SK-N-SH (cell line): ENCODE measurements at regions of chr5 and their contacts with region 1.

Region 1: DNA sequence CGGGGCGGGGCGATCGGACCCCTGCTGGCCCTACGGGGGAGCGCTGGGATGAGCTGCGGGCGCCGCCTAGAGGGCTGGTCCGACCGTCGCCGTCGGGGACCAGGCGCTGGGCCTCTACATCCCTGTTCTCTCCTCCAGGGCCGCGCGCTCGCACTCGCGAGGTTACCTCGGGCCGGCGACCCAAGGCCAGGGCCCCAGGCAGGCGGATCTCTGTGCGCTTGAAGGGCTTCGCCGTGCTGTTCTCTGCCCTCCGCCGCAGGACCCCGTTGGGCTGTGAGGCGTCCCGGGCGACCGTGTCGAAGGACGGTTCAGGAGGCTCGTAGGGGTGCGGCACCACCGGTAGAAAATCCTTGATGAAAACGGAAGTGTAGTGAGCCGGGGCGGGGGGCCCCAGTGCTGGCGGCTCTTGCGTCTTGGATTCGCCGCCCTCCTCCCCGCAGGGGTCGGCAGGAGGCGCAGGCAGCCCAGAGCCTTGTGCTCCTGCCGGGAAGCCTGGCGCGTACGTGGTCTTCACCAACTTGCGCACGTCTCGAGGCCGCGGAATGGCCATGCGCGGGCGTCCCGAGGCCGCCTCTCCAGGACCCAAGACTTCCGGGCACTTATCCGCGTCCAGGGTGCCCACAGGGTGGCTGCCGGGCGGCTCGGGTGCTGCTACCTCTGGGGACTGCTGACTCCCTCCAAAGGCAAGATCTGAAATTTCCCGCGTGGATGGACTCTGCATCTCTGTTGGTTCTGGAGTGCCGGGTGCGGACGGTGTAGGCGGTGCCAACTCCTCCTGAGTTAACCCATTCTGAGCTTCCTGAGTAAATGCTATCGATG is 2.0 kb downstream of the PROB1 start:
- DNase-seq: peak; percentile 92
- H3K4me3 ChIP-seq: peak overlapping the region; percentile 23 to 26; a peak in 2 of 4 replicates
- H3K27ac ChIP-seq: no peak overlapping the region
- H3K4me1 ChIP-seq: peaks cover 0 to 3% of the 10 kb centered on the region in 2 experiments; a peak in 1 of 4 replicates
- H3K27me3 ChIP-seq: peaks cover 12% of the 10 kb centered on the region; the same call in 1 of the 2 replicates
- CTCF ChIP-seq: peak; percentile 38; the same call in 1 of the 2 replicates
- EP300 ChIP-seq: no peak
- RAD21 ChIP-seq: peak; percentile 45

Region 2: GRCh38 chr5:138369706-138370105 is 1023.2 kb before region 1 on chr5:
- CTCF ChIA-PET with region 1: no interaction called
- POLR2A ChIA-PET with region 1: no interaction called
- DNase-seq: no peak
- H3K4me3 ChIP-seq: no peak overlapping the region
- H3K27ac ChIP-seq: no peak overlapping the region
- H3K4me1 ChIP-seq: no peaks in the 10 kb centered on the region; a peak in 1 of 4 replicates
- H3K27me3 ChIP-seq: no peaks in the 10 kb centered on the region
- CTCF ChIP-seq: no peak
- EP300 ChIP-seq: no peak
- RAD21 ChIP-seq: no peak

Region 3: DNA sequence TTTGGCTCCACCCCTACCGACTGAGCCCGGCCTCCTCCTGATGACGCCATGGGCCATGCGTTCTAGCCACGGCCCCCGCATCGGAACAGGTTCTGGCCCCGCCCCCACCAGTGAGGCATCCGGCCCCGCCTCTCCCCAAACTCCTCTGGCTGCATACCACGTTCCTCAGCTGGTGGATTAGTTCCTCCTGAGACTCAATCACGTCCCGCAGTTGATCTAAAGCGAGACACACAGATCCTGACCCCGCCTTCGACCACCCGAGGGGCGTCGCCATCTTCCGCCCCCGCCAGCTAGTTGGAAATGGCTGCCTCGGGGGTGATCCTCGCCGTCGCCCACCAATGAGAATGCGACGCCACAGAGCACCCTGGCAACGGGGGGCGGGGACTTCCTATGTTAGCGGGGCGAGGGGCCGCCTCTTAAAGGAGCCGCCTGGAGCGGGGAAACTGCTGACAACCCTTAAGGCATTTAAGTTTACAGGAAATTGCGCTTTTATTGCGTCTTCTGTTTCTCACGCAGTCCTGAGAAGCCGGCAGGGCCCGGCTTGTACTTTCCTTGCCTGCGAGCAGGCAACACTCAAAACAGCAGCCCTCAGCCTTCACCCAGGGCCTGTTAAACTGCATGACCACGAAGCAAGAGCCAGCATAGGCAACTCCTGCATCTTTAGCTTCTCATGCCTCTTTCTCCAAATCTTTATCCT is 11.0 kb after region 1 on chr5 and contains the start of gene SPATA24:
- CTCF ChIA-PET with region 1: interaction called, 29 read pairs
- POLR2A ChIA-PET with region 1: interaction called, 3 read pairs
- DNase-seq: peak; percentile 95
- H3K4me3 ChIP-seq: peak within 1 kb of the TSS; percentile 57 to 66
- H3K27ac ChIP-seq: peak within 1 kb of the TSS; percentile 94 to 95
- H3K4me1 ChIP-seq: peaks cover 0 to 13% of the 10 kb centered on the region in 2 experiments; a peak in 1 of 4 replicates
- H3K27me3 ChIP-seq: no peaks in the 10 kb centered on the region
- CTCF ChIP-seq: no peak
- EP300 ChIP-seq: no peak
- RAD21 ChIP-seq: no peak
- polyA plus RNA-seq, gene SPATA24: 7.6 and 10.8 TPM in 2 replicates